Heart right ventricle (tissue), 16 donors: ENCODE measurements at regions of chr9 and their contacts with region 1.

Region 1: DNA sequence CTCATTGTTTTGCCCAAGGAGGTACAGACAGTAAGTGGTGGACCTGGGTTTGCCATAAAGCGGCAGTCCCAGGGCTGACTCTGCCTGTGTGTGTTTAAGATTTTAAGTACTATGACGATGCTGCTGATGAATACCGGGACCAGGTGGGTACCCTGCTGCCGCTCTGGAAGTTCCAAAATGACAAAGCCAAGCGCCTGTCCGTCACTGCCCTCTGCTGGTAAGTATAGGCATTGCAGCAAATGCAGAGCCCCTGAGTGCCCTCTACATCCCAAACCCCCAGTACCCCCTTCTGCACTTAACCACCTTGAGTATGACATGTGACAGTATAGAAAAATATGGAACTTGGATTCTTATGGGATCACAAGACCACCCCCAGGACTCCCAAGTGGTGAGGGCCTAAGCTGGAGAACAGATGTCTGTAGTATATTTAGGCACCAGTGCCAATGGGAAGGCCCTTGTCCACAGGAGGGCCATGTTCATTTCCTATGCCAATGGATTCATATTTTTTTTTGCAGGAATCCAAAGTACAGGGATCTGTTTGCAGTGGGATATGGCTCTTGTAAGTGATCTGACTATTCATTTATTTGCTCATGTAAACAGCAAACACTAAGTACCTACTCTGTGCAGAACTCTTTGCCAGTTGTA is 22.0 kb downstream of the ENHO start:
- DNase-seq: peak; percentile 34 to 66
- ATAC-seq: peak in 7 of 8 donors; percentile 25 to 76 (median 46)
- H3K4me3 ChIP-seq: no peak overlapping the region
- H3K27ac ChIP-seq: no peak overlapping the region
- H3K4me1 ChIP-seq: peaks cover 0 to 26% (median 14%) of the 10 kb centered on the region in 9 donors
- H3K27me3 ChIP-seq: peaks cover 0 to 5% (median 0%) of the 10 kb centered on the region in 7 donors
- CTCF ChIP-seq: peak; percentile 93 to 100 (median 98)

Region 2: GRCh38 chr9:34403554-34404380 is 97.0 kb before region 1 on chr9:
- intact Hi-C with region 1: loop called in 8 of 10 experiments (anchors 1 to 10 kb)
- DNase-seq: peak; percentile 64 to 71
- ATAC-seq: peak in 7 of 8 donors; percentile 39 to 71 (median 61)
- H3K4me3 ChIP-seq: no peak overlapping the region
- H3K27ac ChIP-seq: no peak overlapping the region
- H3K4me1 ChIP-seq: peaks cover 0 to 5% (median 0%) of the 10 kb centered on the region in 9 donors
- H3K27me3 ChIP-seq: no peaks in the 10 kb centered on the region
- CTCF ChIP-seq: peak; percentile 92 to 99 (median 98)

Region 3: DNA sequence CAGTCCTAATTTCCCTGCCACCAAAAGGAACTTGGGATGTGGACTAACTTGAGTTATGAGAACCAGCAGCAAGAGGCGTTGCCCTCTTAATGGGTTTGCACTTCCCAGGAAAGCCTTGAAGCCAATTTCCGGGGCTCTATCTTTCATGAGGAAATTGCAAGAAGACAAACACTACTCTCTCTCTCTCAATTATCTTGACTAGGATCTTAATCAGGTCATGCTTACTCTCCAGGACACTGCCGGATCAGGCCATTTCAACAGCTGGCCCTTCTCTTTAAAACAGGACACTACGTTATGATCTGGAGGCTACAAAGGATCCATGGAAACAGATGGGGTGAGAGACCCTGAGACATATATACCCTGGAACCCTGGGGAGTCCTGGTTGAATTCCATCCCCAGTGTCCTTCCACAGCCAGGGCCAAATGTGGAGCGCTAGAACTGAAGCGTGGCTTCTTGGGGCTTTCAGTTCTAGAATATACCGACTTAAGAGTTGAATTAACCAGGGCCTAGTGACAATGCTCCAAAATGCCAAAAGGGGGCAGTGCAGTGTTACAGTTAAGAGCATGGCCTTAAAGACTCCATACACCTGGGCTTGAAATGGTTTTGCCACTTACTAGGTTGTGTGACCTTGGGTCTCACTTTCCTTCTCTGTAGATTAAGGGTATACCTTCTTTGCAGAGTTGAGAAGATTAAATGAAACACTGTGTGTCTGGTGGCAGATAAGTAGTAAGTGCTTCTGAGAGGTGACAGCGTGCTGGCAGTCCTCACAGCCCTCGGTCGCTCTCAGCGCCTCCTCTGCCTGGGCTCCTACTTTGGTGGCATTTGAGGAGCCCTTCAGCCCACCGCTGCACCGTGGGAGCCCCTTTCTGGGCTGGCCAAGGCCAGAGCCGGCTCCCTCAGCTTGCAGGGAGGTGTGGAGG is 63.5 kb before region 1 on chr9:
- intact Hi-C with region 1: loop called (anchors 1 to 5 kb)
- DNase-seq: peak in 1 of 2 donors; percentile 57
- ATAC-seq: peak; percentile 75 to 86 (median 80)
- H3K4me3 ChIP-seq: no peak overlapping the region
- H3K27ac ChIP-seq: no peak overlapping the region
- H3K4me1 ChIP-seq: peaks cover 5 to 50% (median 32%) of the 10 kb centered on the region in 9 donors
- H3K27me3 ChIP-seq: no peaks in the 10 kb centered on the region
- CTCF ChIP-seq: peak; percentile 53 to 86 (median 78)

Region 4: DNA sequence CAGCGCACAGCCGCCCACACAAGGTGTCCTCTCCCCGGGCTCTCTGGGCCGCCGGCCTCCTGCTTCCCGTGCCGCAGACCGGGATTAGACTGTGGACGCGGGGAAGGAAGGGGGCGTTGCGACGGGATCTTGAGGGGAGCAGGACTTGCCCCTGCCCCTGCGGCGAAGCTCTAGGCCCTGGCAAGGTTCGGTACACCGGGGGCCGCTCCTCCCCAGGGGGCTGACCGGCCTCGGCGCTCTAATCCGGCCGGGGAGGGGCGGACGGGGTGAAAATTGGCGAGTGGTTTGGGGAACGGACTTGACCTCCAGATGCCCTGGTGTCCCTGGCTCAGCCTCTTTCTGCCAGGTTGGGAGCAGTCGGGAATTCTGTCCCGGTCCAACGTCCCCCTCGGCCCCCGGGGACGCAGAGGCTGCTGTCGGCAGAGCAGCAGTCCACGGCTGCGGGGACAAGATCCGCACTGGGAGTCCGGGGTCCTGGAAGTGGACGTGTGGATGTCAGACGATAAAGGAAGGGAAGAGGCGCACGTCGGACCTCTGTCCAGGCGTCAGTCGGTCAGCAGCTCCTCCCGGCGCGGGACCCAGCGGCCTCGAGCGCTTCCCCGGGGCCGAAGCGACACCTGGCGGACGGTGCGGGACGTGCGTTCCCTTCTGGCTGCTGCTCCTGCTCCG is 90.6 kb after region 1 on chr9:
- intact Hi-C with region 1: loop called in 3 of 10 experiments (anchors 1 to 5 kb)
- DNase-seq: peak; percentile 85 to 90
- ATAC-seq: peak; percentile 81 to 96 (median 89)
- H3K4me3 ChIP-seq: peak overlapping the region in 9 of 10 donors; percentile 32 to 57 (median 51)
- H3K27ac ChIP-seq: peak overlapping the region in 6 of 10 donors; percentile 12 to 54 (median 32)
- H3K4me1 ChIP-seq: peaks cover 16 to 53% (median 38%) of the 10 kb centered on the region in 9 donors
- H3K27me3 ChIP-seq: peaks cover 0 to 86% (median 56%) of the 10 kb centered on the region in 7 donors
- CTCF ChIP-seq: peak; percentile 82 to 95 (median 92)